PC-3 (cell line): ENCODE measurements at regions of chr2 and their contacts with region 1.

Region 1: GRCh38 chr2:56741601-56742102 is 557.9 kb downstream of the CCDC85A start:
- DNase-seq: peak; percentile 93
- ATAC-seq: peak; percentile 100
- H3K4me3 ChIP-seq: peak overlapping the region; percentile 58
- H3K27ac ChIP-seq: peak overlapping the region; percentile 78
- H3K4me1 ChIP-seq: peaks cover 28% of the 10 kb centered on the region
- H3K27me3 ChIP-seq: no peaks in the 10 kb centered on the region
- CTCF ChIP-seq: no peak

Region 2: DNA sequence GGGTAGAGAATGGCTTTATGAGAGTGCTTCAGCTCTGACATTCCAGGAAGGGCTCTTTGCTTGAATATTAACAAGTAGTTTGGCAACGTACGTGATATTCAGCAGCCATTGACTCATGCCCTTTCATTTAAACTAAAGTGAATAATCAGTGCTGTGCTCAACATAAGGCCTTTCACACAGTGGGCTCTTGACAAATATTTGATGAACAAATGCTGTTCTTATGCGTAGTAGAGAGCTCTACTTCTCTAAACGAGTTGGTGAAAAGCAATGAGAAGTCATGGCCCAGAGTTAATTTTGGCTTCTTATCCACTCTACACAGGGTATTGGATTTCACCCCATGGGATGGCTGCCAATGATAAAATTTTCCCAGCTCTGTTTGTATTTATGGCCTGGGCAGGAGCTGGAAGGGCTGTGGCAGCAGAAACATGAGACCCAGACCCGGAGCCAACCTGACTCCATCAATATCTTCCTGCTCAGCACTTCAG is 219.0 kb before region 1 on chr2:
- CTCF ChIA-PET with region 1: no interaction called
- POLR2A ChIA-PET with region 1: no interaction called
- intact Hi-C with region 1: loop called (anchors 5 kb)
- DNase-seq: peak; percentile 88
- ATAC-seq: peak; percentile 87
- H3K4me3 ChIP-seq: 0 out of 2 replicates have a peak overlapping the region, but pooled peaks have one; percentile 2
- H3K27ac ChIP-seq: peak overlapping the region; percentile 86
- H3K4me1 ChIP-seq: peaks cover 31% of the 10 kb centered on the region
- H3K27me3 ChIP-seq: no peaks in the 10 kb centered on the region
- CTCF ChIP-seq: no peak

Region 3: DNA sequence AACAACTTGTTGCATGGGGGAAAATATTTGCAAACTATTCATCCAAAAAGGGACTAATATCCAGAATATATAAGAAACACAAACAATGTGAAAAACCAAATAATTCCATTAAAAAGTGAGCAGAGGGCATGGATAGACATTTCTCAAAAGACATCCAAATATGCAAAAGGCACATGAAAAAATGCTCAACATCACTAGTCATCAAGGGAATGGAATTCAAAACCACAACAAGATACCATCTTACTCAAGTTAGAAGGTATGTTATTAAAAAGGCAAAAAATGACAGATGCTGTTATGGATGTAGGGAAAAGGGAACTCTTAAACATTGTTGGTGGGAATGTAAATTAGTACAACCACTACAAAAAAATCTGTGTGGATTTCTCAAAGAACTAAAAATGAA is 161.4 kb before region 1 on chr2:
- CTCF ChIA-PET with region 1: no interaction called
- POLR2A ChIA-PET with region 1: no interaction called
- intact Hi-C with region 1: loop called (anchors 5 kb)
- DNase-seq: peak; percentile 83
- ATAC-seq: peak; percentile 65
- H3K4me3 ChIP-seq: no peak overlapping the region
- H3K27ac ChIP-seq: no peak overlapping the region
- H3K4me1 ChIP-seq: peaks cover 47% of the 10 kb centered on the region
- H3K27me3 ChIP-seq: no peaks in the 10 kb centered on the region
- CTCF ChIP-seq: no peak